CD4-positive, alpha-beta memory T cell (primary cell): ENCODE measurements at regions of chr9 and their contacts with region 1.

Region 1: DNA sequence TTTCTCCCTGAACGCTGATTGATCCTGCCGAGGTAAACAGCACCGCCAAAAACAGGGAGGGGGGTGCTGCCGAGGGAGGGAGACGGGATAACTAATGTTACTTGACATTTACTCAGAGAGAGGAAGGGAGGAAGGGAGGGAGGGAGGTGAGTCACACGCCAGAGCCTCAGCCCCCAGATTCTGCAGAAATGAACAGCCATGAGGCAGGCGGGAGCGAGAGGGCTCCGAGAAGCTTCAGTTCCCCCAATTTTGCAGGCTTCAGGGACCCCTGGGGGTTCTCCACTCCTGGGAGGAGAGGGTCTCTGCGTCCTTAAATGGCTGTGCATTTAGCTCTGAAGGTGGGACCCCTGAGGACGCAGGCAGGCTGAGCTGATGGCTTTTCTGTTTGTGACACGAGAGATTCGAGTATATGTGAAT is 59.1 kb upstream of the IER5L start:
- DNase-seq: peak in 2 of 5 donors; percentile 18 to 66
- H3K4me3 ChIP-seq: peak overlapping the region in 1 of 2 donors; percentile 47
- H3K4me3 Mint-ChIP-seq: peak overlapping the region; percentile 76 to 88 (median 86)
- H3K27ac ChIP-seq: peak overlapping the region; percentile 29
- H3K27ac Mint-ChIP-seq: peak overlapping the region; percentile 88 to 96 (median 93)
- H3K4me1 ChIP-seq: peaks cover 52% of the 10 kb centered on the region
- H3K4me1 Mint-ChIP-seq: peaks cover 39 to 63% (median 51%) of the 10 kb centered on the region in 4 donors
- H3K27me3 ChIP-seq: no peaks in the 10 kb centered on the region
- H3K27me3 Mint-ChIP-seq: no peaks in the 10 kb centered on the region

Region 2: GRCh38 chr9:129202613-129203555 is 34.3 kb before region 1 on chr9:
- CTCF ChIA-PET with region 1: no interaction called
- POLR2A ChIA-PET with region 1: interaction called, 5 read pairs
- intact Hi-C with region 1: loop called (anchors 2 kb)
- DNase-seq: peak; percentile 87 to 93 (median 89)
- H3K4me3 ChIP-seq: peak overlapping the region in 1 of 2 donors; percentile 51
- H3K4me3 Mint-ChIP-seq: peak overlapping the region; percentile 63 to 76 (median 72)
- H3K27ac ChIP-seq: peak overlapping the region; percentile 61
- H3K27ac Mint-ChIP-seq: peak overlapping the region; percentile 50 to 92 (median 80)
- H3K4me1 ChIP-seq: peaks cover 22% of the 10 kb centered on the region
- H3K4me1 Mint-ChIP-seq: peaks cover 9 to 20% (median 14%) of the 10 kb centered on the region in 4 donors
- H3K27me3 ChIP-seq: no peaks in the 10 kb centered on the region
- H3K27me3 Mint-ChIP-seq: peaks cover 0 to 2% of the 10 kb centered on the region in 2 donors

Region 3: GRCh38 chr9:129225815-129226214 is 11.4 kb before region 1 on chr9:
- CTCF ChIA-PET with region 1: interaction called, 18 read pairs
- POLR2A ChIA-PET with region 1: interaction called, 36 read pairs
- intact Hi-C with region 1: no loop called
- DNase-seq: peak in 4 of 5 donors; percentile 27 to 45 (median 39)
- H3K4me3 ChIP-seq: no peak overlapping the region
- H3K4me3 Mint-ChIP-seq: peak overlapping the region in 7 of 8 donors; percentile 25 to 65 (median 49)
- H3K27ac ChIP-seq: no peak overlapping the region
- H3K27ac Mint-ChIP-seq: peak overlapping the region in 6 of 7 donors; percentile 30 to 90 (median 63)
- H3K4me1 ChIP-seq: peaks cover 26% of the 10 kb centered on the region
- H3K4me1 Mint-ChIP-seq: peaks cover 12 to 39% (median 27%) of the 10 kb centered on the region in 4 donors
- H3K27me3 ChIP-seq: no peaks in the 10 kb centered on the region
- H3K27me3 Mint-ChIP-seq: no peaks in the 10 kb centered on the region

Region 4: DNA sequence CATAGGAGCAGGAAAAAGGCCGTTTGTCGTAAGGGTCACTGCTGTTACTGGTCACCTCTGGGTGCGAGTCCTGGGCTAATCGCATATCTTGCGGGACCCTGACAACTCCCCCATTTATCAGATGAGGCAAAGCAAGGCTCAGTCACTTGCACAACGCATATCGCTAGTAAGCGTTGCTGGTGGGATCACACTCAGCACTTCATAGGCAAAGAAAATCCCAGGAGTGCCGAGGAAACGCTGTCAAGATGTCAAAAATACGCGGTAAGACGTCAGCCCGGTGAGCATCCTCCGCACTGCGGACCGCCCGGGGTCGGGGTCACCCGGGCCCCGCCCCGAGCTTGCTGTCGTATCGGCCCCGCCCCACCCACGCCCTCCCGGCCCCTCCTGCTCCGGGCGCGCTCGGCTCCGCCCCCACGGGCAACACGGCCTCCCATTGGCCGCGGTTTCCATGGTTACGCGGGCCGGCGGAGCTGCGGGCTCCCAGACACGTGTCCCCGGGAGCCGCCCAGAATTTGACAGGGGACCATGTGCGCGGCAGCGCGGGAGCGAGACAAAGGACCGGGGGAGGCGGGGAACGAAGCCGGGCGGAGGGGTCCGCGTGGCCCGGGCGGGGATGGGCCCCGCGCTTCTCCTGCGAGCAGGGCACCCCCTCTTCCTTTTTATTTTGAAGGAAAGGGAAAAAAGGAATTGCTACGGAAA is 21.1 kb after region 1 on chr9:
- CTCF ChIA-PET with region 1: no interaction called
- POLR2A ChIA-PET with region 1: interaction called, 19 read pairs
- intact Hi-C with region 1: loop called (anchors 2 kb)
- DNase-seq: peak; percentile 87 to 90 (median 88)
- H3K4me3 ChIP-seq: peak overlapping the region; percentile 42 to 47
- H3K4me3 Mint-ChIP-seq: peak overlapping the region; percentile 54 to 81 (median 74)
- H3K27ac ChIP-seq: no peak overlapping the region
- H3K27ac Mint-ChIP-seq: peak overlapping the region; percentile 52 to 88 (median 71)
- H3K4me1 ChIP-seq: peaks cover 30% of the 10 kb centered on the region
- H3K4me1 Mint-ChIP-seq: peaks cover 15 to 39% (median 29%) of the 10 kb centered on the region in 4 donors
- H3K27me3 ChIP-seq: no peaks in the 10 kb centered on the region
- H3K27me3 Mint-ChIP-seq: peaks cover 1 to 10% of the 10 kb centered on the region in 2 donors